ENCODE measurements at regions of chr4 and their contacts with region 1.

Region 1: GRCh38 chr4:56757821-56758411 is 63.6 kb downstream of the SPINK2 start:
- DNase-seq: peak; percentile 26 to 85 (median 65)
- ATAC-seq: peak; percentile 82
- H3K4me3 ChIP-seq: peak overlapping the region; percentile 33 to 44
- H3K4me3 Mint-ChIP-seq: peak overlapping the region; percentile 82
- H3K27ac ChIP-seq: peak overlapping the region; percentile 29 to 81
- H3K27ac Mint-ChIP-seq: peak overlapping the region; percentile 98
- H3K4me1 ChIP-seq: peaks cover 41% of the 10 kb centered on the region
- H3K4me1 Mint-ChIP-seq: peaks cover 60% of the 10 kb centered on the region
- H3K27me3 ChIP-seq: no peaks in the 10 kb centered on the region
- H3K27me3 Mint-ChIP-seq: no peaks in the 10 kb centered on the region
- CTCF ChIP-seq: no peak

Region 2: GRCh38 chr4:56575820-56576429 is 182.0 kb before region 1 on chr4:
- CTCF ChIA-PET with region 1: interaction called, 10 read pairs
- POLR2A ChIA-PET with region 1: interaction called, 4 read pairs
- intact Hi-C with region 1: no loop called
- DNase-seq: peak in 2 of 9 experiments; percentile 35 to 52
- ATAC-seq: peak; percentile 36
- H3K4me3 ChIP-seq: no peak overlapping the region
- H3K4me3 Mint-ChIP-seq: no peak overlapping the region
- H3K27ac ChIP-seq: no peak overlapping the region
- H3K27ac Mint-ChIP-seq: no peak overlapping the region
- H3K4me1 ChIP-seq: no peaks in the 10 kb centered on the region
- H3K4me1 Mint-ChIP-seq: no peaks in the 10 kb centered on the region
- H3K27me3 ChIP-seq: no peaks in the 10 kb centered on the region
- H3K27me3 Mint-ChIP-seq: peaks cover 2% of the 10 kb centered on the region
- CTCF ChIP-seq: peak; percentile 15

Region 3: GRCh38 chr4:56626963-56627362 is 131.0 kb before region 1 on chr4:
- CTCF ChIA-PET with region 1: no interaction called
- POLR2A ChIA-PET with region 1: no interaction called
- intact Hi-C with region 1: no loop called
- DNase-seq: peak in 2 of 9 experiments; percentile 19 to 32
- ATAC-seq: no peak
- H3K4me3 ChIP-seq: no peak overlapping the region
- H3K4me3 Mint-ChIP-seq: no peak overlapping the region
- H3K27ac ChIP-seq: no peak overlapping the region
- H3K27ac Mint-ChIP-seq: no peak overlapping the region
- H3K4me1 ChIP-seq: no peaks in the 10 kb centered on the region
- H3K4me1 Mint-ChIP-seq: no peaks in the 10 kb centered on the region
- H3K27me3 ChIP-seq: no peaks in the 10 kb centered on the region
- H3K27me3 Mint-ChIP-seq: peaks cover 1% of the 10 kb centered on the region
- CTCF ChIP-seq: no peak

Region 4: DNA sequence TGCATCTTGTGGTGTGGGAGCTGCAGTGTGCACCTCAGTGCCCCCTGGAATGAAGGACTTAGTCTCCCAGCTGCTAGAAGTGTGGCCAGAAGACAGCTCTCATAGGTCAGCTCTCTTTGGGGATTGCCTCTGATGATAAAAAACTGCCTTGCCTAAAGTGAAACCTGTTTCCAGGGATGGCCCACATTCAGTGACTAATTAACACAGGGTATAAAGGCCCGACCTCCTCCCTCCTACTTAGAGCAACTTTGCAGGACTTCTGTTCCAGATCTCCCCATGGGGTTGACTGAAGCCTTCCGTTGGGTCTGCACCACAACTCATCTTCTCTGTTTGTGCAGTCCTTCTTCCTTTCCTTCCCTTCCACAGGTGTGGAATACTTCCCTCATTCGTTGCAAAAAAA is 10.4 kb after region 1 on chr4:
- CTCF ChIA-PET with region 1: interaction called, 3 read pairs
- POLR2A ChIA-PET with region 1: interaction called, 11 read pairs
- intact Hi-C with region 1: no loop called
- DNase-seq: no peak
- ATAC-seq: no peak
- H3K4me3 ChIP-seq: no peak overlapping the region
- H3K4me3 Mint-ChIP-seq: no peak overlapping the region
- H3K27ac ChIP-seq: no peak overlapping the region
- H3K27ac Mint-ChIP-seq: no peak overlapping the region
- H3K4me1 ChIP-seq: no peaks in the 10 kb centered on the region
- H3K4me1 Mint-ChIP-seq: peaks cover 4% of the 10 kb centered on the region
- H3K27me3 ChIP-seq: no peaks in the 10 kb centered on the region
- H3K27me3 Mint-ChIP-seq: no peaks in the 10 kb centered on the region
- CTCF ChIP-seq: no peak

Region 5: DNA sequence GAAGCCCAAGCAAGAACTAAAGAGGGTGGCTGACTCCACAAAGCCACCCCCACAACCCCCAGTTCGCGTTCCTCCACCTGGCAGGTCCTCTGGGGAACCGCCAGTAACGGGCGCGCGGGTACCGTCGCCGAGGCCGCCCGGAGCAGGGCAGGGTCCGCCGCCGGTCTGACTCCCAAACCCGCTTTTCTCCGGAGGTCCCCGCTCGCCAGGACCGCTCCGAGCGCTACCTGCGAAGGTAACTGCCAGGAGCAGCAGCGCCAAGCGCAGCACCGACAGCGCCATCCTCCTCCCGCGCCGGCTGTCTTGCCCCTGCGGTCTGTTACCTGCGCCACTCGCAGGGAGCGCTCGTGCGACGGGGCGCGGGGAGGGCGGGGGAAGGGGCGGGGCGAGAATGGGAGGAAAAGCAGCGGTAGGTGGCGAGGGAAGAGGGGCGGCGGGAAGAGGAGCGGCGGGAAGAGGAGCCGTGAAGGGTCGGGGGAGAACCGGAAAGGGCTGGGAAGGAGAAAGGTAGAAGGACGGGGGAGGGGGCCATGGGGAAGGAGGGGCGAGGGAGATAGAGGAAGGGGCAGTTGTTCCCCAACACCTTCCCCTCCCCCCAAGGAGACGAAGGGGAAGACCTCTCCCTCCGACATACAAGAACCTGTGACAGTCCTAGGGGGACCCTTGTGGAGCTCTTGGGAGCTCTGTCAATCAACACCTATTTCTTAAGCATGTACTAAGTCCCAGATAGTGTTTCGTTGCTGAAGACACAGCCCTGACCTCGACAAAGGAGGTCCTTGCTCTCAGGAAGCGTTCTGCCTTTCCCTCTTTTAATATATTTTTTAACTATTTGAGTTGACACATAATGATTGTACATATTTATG is 63.7 kb after region 1 on chr4 and contains the start of gene SPINK2:
- CTCF ChIA-PET with region 1: interaction called, 3 read pairs
- POLR2A ChIA-PET with region 1: no interaction called
- intact Hi-C with region 1: loop called in 1 of 2 experiments (anchors 5 kb)
- DNase-seq: peak; percentile 41 to 88 (median 76)
- ATAC-seq: peak; percentile 87
- H3K4me3 ChIP-seq: peak within 1 kb of the TSS; percentile 58 to 65
- H3K4me3 Mint-ChIP-seq: peak within 1 kb of the TSS; percentile 81
- H3K27ac ChIP-seq: peak within 1 kb of the TSS; percentile 36
- H3K27ac Mint-ChIP-seq: peak within 1 kb of the TSS; percentile 27
- H3K4me1 ChIP-seq: peaks cover 34% of the 10 kb centered on the region
- H3K4me1 Mint-ChIP-seq: peaks cover 36% of the 10 kb centered on the region
- H3K27me3 ChIP-seq: no peaks in the 10 kb centered on the region
- H3K27me3 Mint-ChIP-seq: no peaks in the 10 kb centered on the region
- CTCF ChIP-seq: no peak
- total RNA-seq, gene SPINK2: 2.6 to 4.4 TPM